ENCODE measurements at regions of chr3 and their contacts with region 1.

Region 1: GRCh38 chr3:33717866-33718594 is at the start of gene CLASP2:
- DNase-seq: peak; percentile 69 to 95 (median 84)
- ATAC-seq: peak; percentile 79
- H3K4me3 ChIP-seq: peak within 1 kb of the TSS; percentile 81 to 95
- H3K4me3 Mint-ChIP-seq: peak within 1 kb of the TSS; percentile 95
- H3K27ac ChIP-seq: peak within 1 kb of the TSS; percentile 92 to 95
- H3K27ac Mint-ChIP-seq: peak within 1 kb of the TSS; percentile 98
- H3K4me1 ChIP-seq: peaks cover 14% of the 10 kb centered on the region
- H3K4me1 Mint-ChIP-seq: peaks cover 11% of the 10 kb centered on the region
- H3K27me3 ChIP-seq: no peaks in the 10 kb centered on the region
- H3K27me3 Mint-ChIP-seq: no peaks in the 10 kb centered on the region
- CTCF ChIP-seq: no peak
- total RNA-seq, gene CLASP2: 62.6 to 63.2 TPM

Region 2: DNA sequence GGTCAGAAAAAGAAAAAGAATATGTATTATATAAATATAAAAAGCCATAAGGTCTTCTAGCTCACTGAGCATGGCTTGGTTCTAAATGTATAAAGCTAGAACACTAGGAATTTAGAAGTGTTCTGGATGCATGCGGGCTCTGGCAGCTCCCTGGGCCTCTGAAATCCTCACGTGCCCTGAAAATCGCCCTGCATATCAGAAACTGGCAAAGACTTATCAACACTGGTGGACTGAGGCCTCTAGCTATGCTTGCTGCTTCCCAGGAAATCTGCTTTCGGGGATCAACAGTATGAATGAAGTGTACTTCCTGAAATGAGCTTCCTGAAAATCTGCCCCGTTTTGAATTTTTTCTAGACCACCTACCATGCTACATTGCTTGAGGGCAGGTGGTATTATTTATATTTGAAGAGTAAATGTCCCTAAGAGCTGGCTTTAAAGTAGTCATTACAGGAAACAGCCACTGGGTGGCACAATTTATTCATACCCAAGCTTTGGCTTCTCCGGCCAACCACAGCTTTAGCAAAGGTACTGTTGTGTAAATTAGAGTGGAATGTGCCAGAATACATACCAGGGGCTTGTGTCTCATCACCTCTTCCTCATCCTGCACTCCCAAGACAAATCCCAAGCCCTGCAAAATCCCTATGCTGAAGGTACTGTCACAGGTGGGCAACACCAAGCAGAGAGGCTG is 586.6 kb before region 1 on chr3:
- CTCF ChIA-PET with region 1: no interaction called
- POLR2A ChIA-PET with region 1: no interaction called
- intact Hi-C with region 1: loop called (anchors 2 to 5 kb)
- DNase-seq: peak in 4 of 9 experiments; percentile 21 to 61 (median 40)
- ATAC-seq: peak; percentile 69
- H3K4me3 ChIP-seq: no peak overlapping the region
- H3K4me3 Mint-ChIP-seq: no peak overlapping the region
- H3K27ac ChIP-seq: no peak overlapping the region
- H3K27ac Mint-ChIP-seq: no peak overlapping the region
- H3K4me1 ChIP-seq: no peaks in the 10 kb centered on the region
- H3K4me1 Mint-ChIP-seq: peaks cover 3% of the 10 kb centered on the region
- H3K27me3 ChIP-seq: no peaks in the 10 kb centered on the region
- H3K27me3 Mint-ChIP-seq: no peaks in the 10 kb centered on the region
- CTCF ChIP-seq: peak; percentile 84

Region 3: GRCh38 chr3:33440323-33441232 is 277.5 kb before region 1 on chr3 and contains the start of gene UBP1:
- CTCF ChIA-PET with region 1: no interaction called
- POLR2A ChIA-PET with region 1: interaction called, 7 read pairs
- intact Hi-C with region 1: loop called (anchors 1 to 5 kb)
- DNase-seq: peak; percentile 90 to 100 (median 95)
- ATAC-seq: peak; percentile 81
- H3K4me3 ChIP-seq: peak within 1 kb of the TSS; percentile 79 to 81
- H3K4me3 Mint-ChIP-seq: peak within 1 kb of the TSS; percentile 100
- H3K27ac ChIP-seq: peak within 1 kb of the TSS; percentile 94 to 96
- H3K27ac Mint-ChIP-seq: peak within 1 kb of the TSS; percentile 100
- H3K4me1 ChIP-seq: peaks cover 33% of the 10 kb centered on the region
- H3K4me1 Mint-ChIP-seq: peaks cover 48% of the 10 kb centered on the region
- H3K27me3 ChIP-seq: no peaks in the 10 kb centered on the region
- H3K27me3 Mint-ChIP-seq: no peaks in the 10 kb centered on the region
- CTCF ChIP-seq: no peak
- total RNA-seq, gene UBP1: 54.4 to 55.9 TPM

Region 4: DNA sequence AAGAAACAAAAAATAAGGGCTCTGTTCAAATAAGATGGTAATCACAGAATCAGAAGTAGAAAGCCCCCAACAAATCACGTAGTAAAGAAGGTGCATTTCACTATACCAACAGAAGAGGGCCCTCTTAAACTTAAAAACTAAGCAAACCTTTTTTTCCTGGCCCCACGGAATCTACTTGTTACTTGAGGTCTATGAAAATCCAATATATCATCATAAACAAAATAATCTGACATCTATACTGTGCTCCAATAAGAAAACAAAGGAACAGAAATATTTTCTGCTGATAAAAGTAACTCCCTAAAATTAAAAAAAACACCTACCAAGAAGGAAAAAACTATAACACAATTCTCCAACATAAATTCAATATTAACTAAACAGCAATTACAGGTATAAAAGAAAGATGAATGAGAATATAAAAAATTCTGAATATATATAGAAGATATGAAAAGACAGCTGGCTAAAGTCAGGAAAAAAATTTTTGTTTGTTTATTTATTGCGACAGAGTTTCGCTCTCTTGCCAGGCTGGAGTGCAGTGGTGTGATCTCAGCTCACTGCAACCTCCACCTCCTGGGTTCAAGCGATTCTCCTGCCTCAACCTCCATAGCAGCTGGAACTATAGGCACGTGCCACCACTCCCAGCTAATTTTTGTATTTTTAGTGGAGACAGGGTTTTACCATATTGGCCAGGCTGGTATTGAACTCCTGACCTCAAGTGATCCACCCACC is 81.7 kb before region 1 on chr3:
- CTCF ChIA-PET with region 1: interaction called, 3 read pairs
- POLR2A ChIA-PET with region 1: no interaction called
- intact Hi-C with region 1: loop called (anchors 1 kb)
- DNase-seq: peak in 2 of 9 experiments; percentile 57 to 68
- ATAC-seq: peak; percentile 71
- H3K4me3 ChIP-seq: no peak overlapping the region
- H3K4me3 Mint-ChIP-seq: no peak overlapping the region
- H3K27ac ChIP-seq: no peak overlapping the region
- H3K27ac Mint-ChIP-seq: no peak overlapping the region
- H3K4me1 ChIP-seq: no peaks in the 10 kb centered on the region
- H3K4me1 Mint-ChIP-seq: peaks cover 2% of the 10 kb centered on the region
- H3K27me3 ChIP-seq: no peaks in the 10 kb centered on the region
- H3K27me3 Mint-ChIP-seq: no peaks in the 10 kb centered on the region
- CTCF ChIP-seq: peak; percentile 63

Region 5: GRCh38 chr3:33699275-33699674 is 18.8 kb before region 1 on chr3:
- CTCF ChIA-PET with region 1: interaction called, 3 read pairs
- POLR2A ChIA-PET with region 1: no interaction called
- intact Hi-C with region 1: loop called in 1 of 2 experiments (anchors 2 kb)
- DNase-seq: no peak
- ATAC-seq: no peak
- H3K4me3 ChIP-seq: no peak overlapping the region
- H3K4me3 Mint-ChIP-seq: no peak overlapping the region
- H3K27ac ChIP-seq: no peak overlapping the region
- H3K27ac Mint-ChIP-seq: no peak overlapping the region
- H3K4me1 ChIP-seq: no peaks in the 10 kb centered on the region
- H3K4me1 Mint-ChIP-seq: peaks cover 39% of the 10 kb centered on the region
- H3K27me3 ChIP-seq: no peaks in the 10 kb centered on the region
- H3K27me3 Mint-ChIP-seq: no peaks in the 10 kb centered on the region
- CTCF ChIP-seq: no peak

Region 6: GRCh38 chr3:33798411-33799201 is 80.6 kb after region 1 on chr3 and contains the start of gene PDCD6IP:
- CTCF ChIA-PET with region 1: no interaction called
- POLR2A ChIA-PET with region 1: interaction called, 8 read pairs
- intact Hi-C with region 1: loop called in 1 of 2 experiments (anchors 1 kb)
- DNase-seq: peak; percentile 76 to 94 (median 86)
- ATAC-seq: peak; percentile 76
- H3K4me3 ChIP-seq: peak within 1 kb of the TSS; percentile 76 to 96
- H3K4me3 Mint-ChIP-seq: peak within 1 kb of the TSS; percentile 97
- H3K27ac ChIP-seq: peak within 1 kb of the TSS; percentile 74 to 90
- H3K27ac Mint-ChIP-seq: peak within 1 kb of the TSS; percentile 98
- H3K4me1 ChIP-seq: peaks cover 32% of the 10 kb centered on the region
- H3K4me1 Mint-ChIP-seq: peaks cover 53% of the 10 kb centered on the region
- H3K27me3 ChIP-seq: no peaks in the 10 kb centered on the region
- H3K27me3 Mint-ChIP-seq: no peaks in the 10 kb centered on the region
- CTCF ChIP-seq: no peak
- total RNA-seq, gene PDCD6IP: 84.7 to 92.4 TPM